Right ventricle myocardium inferior (tissue), 1 donor: ENCODE measurements at regions of chr20 and their contacts with region 1.

Region 1: DNA sequence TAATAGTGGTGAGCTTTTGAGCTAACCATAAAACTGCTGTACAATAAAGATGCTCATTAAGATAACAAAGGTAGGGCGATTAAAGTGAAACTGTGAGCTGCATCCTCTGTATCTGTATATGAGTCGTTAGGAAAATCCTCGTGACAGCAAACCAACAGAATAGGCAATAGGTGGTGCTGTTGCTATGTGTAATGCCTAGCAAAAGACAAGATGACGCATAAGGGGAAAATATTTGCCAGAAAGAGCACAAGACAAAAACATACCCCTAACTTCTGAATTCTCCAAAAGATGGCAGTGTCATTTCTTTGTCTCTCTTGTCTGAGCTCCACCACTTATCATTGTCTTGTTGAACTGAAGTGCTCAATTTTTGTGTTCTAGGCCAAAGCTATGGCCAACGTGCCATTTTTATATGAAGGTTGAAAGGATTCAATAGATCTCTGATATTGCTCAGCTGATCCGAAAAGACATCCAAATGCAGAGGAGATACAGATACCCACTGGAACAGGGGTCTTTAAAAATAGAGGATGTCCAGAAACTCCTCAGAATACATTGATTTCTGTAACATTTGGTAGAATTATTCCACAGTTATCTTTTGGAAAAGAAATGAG is 56.3 kb upstream of the ANKEF1 start:
- DNase-seq: no peak
- ATAC-seq: peak; percentile 79

Region 2: DNA sequence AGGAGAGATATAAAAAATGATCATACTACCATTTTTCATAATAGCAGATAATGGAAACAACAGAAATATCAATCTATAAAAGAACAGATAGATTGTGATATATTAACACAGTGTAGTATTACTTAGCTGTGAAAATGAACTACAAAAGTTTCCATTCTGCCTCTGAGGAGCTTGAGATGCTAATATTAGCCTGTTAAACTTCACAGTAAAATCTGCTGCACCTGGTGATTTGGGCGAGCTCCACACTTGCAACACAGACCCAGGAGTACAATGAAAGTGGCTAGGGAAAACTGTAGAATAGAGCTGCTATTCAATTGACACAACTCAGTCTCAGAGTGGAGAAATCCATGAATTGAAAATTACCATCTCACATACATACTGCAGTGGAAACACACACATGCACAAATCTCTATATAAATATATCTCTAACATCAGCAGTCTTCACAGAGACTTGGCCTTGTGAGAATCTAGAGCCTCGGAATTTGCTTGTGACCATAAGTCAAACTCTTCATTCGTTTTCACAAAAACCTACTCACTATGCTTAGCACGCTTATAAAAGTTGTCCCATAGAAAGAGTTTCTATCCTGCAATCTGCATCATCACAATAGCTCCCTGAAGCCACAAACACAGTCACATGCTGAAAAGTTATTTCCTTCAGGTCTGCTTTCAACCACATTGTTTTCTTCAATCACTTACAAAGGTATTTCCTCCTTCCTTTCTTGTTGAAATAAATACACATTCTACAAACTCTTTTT is 272.6 kb before region 1 on chr20:
- intact Hi-C with region 1: no loop called
- DNase-seq: no peak
- ATAC-seq: no peak

Region 3: DNA sequence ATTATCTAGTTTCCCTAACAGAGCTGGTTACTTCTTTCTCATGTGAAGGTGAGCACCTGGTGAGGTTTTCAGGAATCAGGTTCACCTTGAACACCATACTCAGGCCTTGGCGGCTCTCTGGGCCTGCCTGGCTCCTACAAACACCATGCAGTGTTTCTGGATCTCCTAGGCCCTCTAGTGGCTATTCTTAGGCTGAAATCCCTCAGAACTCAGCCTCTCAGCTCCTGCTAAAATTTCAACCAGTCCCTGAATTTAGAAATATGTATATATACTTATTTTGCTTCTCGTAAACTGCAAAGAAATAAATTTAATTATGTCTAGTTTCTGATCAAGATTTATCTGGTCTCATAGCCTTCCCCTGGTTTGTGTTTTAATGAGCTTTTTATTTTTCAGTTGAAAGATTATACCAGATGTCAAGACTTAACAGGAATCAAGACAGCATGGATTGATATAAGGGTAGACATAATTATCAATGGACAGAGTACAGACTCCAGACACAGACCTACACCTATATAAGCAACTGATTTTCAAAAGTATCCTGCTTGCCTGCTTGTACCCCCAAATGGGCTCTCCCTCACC is 112.2 kb after region 1 on chr20:
- intact Hi-C with region 1: loop called (anchors 2 kb)
- DNase-seq: no peak
- ATAC-seq: peak; percentile 67

Region 4: GRCh38 chr20:10427060-10427692 is 448.7 kb after region 1 on chr20:
- intact Hi-C with region 1: loop called (anchors 5 kb)
- DNase-seq: peak; percentile 81
- ATAC-seq: no peak